GM12878 (cell line): ENCODE measurements at regions of chr5 and their contacts with region 1.

Region 1: GRCh38 chr5:12825163-12825562 is 920.9 kb upstream of the CTNND2 start:
- DNase-seq: no peak
- ATAC-seq: no peak
- H3K4me3 ChIP-seq: no peak overlapping the region
- H3K27ac ChIP-seq: no peak overlapping the region
- H3K4me1 ChIP-seq: no peaks in the 10 kb centered on the region
- H3K27me3 ChIP-seq: no peaks in the 10 kb centered on the region
- CTCF ChIP-seq: no peak
- EP300 ChIP-seq: no peak
- POLR2A ChIP-seq: no peak
- RAD21 ChIP-seq: no peak

Region 2: DNA sequence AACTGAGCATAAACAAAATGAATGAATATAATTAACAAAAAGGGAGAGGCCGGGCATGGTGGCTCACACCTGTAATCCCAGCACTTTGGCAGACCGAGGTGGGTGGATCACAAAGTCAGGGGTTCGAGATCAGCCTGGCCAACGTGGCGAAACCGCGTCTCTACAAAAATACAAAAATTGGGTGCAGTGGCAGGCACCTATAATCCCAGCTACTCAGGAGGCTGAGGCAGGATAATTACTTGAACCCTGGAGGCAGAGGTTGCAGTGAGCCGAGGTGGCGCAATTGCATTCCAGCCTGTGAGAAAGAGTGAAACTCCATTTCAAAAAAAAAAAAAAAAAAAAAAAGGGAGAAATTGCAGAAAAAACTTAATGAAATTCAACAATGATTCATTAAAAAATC is 81.6 kb before region 1 on chr5:
- CTCF ChIA-PET with region 1: no interaction called
- POLR2A ChIA-PET with region 1: no interaction called
- RAD21 ChIA-PET with region 1: no interaction called
- SMC1A ChIA-PET with region 1: no interaction called
- in situ Hi-C with region 1: no loop called
- intact Hi-C with region 1: no loop called
- DNase-seq: no peak
- ATAC-seq: no peak
- H3K4me3 ChIP-seq: no peak overlapping the region
- H3K27ac ChIP-seq: no peak overlapping the region
- H3K4me1 ChIP-seq: no peaks in the 10 kb centered on the region
- H3K27me3 ChIP-seq: no peaks in the 10 kb centered on the region
- CTCF ChIP-seq: no peak
- EP300 ChIP-seq: no peak
- POLR2A ChIP-seq: no peak
- RAD21 ChIP-seq: no peak

Region 3: DNA sequence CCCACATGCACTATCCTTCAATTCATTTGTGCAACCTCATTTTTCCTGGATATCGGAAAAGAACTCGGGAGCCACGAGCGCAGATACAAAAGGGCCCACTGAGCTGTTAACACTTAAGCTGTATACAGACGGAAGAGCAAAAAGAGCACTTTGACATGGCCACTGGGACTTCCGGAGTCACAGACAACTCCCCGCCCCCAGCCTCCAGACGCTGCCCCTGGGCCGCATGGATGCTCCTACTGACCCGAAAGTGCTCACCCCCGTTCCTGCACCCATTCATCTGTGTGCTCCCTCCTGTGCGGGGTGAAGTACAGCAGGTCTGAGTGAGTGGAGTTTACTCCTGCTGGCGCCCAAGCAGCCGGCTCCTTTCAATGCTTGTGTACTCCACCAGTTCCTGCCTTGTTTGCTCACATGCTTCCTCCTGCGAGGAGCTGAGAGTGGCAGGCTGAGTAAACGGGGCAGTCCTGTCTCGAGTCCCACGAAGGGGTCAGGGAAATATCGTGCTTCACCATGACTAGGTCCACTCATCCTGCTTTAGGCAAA is 19.9 kb before region 1 on chr5:
- CTCF ChIA-PET with region 1: no interaction called
- POLR2A ChIA-PET with region 1: no interaction called
- RAD21 ChIA-PET with region 1: no interaction called
- SMC1A ChIA-PET with region 1: no interaction called
- in situ Hi-C with region 1: no loop called
- intact Hi-C with region 1: loop called (anchors 1 kb)
- DNase-seq: no peak
- ATAC-seq: no peak
- H3K4me3 ChIP-seq: no peak overlapping the region
- H3K27ac ChIP-seq: no peak overlapping the region
- H3K4me1 ChIP-seq: no peaks in the 10 kb centered on the region
- H3K27me3 ChIP-seq: no peaks in the 10 kb centered on the region
- CTCF ChIP-seq: no peak
- EP300 ChIP-seq: no peak
- POLR2A ChIP-seq: no peak
- RAD21 ChIP-seq: no peak